ENCODE measurements at regions of chr11 and their contacts with region 1.

Region 1: DNA sequence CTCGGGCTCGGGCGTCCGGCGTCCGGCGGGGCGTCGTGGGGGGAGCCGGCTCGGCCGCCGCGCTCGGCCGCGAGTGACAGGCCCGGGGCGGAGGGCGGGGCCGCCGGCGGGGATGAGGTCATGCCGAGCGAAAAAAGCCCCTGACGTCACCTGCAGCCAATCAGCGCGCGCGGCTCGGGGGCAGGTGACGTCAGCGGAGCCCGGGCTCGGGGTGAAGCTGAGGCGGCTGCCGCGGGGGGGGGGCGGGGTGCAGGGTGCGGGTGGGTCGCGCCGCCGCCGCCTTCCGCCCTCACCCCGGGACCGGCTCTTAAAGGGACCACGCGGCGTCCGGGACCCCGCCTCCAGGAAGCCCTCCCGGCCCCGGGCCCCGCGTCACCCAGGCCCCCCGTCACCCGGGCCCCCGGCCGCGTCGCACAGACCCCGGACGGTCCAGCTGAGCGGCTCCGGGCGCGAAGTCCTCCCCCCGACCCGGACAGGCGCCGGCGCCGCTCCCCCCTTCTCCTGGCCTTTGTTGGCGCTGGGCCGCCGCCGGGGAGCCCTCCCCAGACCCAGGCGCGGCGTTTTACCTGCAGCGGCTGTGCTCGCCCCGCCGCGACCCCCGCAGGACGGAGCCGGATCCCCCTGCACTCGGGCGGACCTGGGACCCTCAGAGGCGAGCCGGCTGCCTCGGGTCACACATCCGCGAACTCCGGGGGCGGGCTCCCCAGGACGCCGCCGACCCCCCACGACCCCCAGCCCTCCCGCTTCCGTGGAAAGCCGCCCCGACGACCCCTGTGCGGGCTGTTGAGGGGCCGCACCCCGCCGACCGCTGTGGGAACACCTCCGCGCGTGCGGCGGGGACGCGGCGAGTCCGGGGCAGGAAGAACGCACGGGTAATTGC is at the start of gene DUSP8:
- DNase-seq: peak; percentile 96
- ATAC-seq: peak; percentile 64
- H3K4me3 Mint-ChIP-seq: peak within 1 kb of the TSS; percentile 51
- H3K27ac Mint-ChIP-seq: no peak within 1 kb of the TSS
- H3K4me1 Mint-ChIP-seq: peaks cover 9% of the 10 kb centered on the region
- H3K27me3 Mint-ChIP-seq: peaks cover 2% of the 10 kb centered on the region
- total RNA-seq, gene DUSP8: 1.3 to 2.8 TPM

Region 2: GRCh38 chr11:747158-748006 is 825.1 kb before region 1 on chr11 and contains the start of gene TALDO1:
- CTCF ChIA-PET with region 1: no interaction called
- POLR2A ChIA-PET with region 1: no interaction called
- intact Hi-C with region 1: loop called in 1 of 2 experiments (anchors 2 kb)
- DNase-seq: peak; percentile 92
- ATAC-seq: peak; percentile 91
- H3K4me3 Mint-ChIP-seq: peak within 1 kb of the TSS; percentile 82
- H3K27ac Mint-ChIP-seq: peak within 1 kb of the TSS; percentile 72
- H3K4me1 Mint-ChIP-seq: peaks cover 20% of the 10 kb centered on the region
- H3K27me3 Mint-ChIP-seq: no peaks in the 10 kb centered on the region
- total RNA-seq, gene TALDO1: 239 to 246 TPM

Region 3: DNA sequence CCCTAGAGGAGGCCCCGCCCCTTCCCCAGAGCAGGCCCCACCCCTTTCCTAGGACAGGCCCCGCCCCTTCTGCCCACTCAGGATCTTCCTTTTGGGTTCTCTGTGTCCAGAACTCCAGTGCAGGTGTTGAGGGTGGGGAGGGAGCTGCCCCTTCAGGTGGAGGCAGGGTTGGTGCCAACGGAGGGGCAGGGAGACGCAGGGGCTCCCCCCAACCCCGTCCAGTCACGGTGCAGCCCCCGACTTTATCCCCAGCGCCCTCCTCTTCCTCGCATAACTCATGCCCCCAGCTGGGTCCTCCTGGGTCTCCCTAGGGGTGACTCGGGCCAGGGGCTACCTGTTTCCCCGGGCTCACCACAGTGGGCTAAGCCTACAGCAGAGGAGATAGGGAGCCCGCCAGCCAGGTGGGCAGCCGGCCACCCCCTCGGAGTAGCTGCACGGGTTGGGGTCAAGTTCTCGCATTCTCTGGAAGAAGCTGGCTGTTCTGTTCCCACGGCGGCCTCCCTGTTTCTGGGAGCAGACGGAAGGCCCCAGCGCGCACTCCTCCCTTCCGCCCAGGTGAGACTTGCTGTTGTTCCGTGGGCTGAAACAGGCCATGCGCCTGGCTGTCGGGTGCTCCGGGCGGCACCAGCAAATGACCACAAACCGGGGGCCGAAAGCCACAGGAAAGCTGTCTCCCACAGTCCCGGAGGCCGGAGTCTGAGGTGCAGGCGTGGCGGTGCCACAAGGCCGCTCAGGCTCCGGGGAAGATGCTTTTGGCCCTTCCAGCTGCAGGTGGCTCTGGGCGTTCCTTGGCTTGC is 458.8 kb before region 1 on chr11:
- CTCF ChIA-PET with region 1: no interaction called
- POLR2A ChIA-PET with region 1: no interaction called
- intact Hi-C with region 1: loop called in 1 of 2 experiments (anchors 1 kb)
- DNase-seq: peak; percentile 32
- ATAC-seq: peak; percentile 37
- H3K4me3 Mint-ChIP-seq: no peak overlapping the region
- H3K27ac Mint-ChIP-seq: no peak overlapping the region
- H3K4me1 Mint-ChIP-seq: no peaks in the 10 kb centered on the region
- H3K27me3 Mint-ChIP-seq: no peaks in the 10 kb centered on the region

Region 4: GRCh38 chr11:1309498-1310317 is 262.7 kb before region 1 on chr11 and contains the start of gene TOLLIP:
- CTCF ChIA-PET with region 1: no interaction called
- POLR2A ChIA-PET with region 1: no interaction called
- intact Hi-C with region 1: loop called in 1 of 2 experiments (anchors 1 kb)
- DNase-seq: peak; percentile 98
- ATAC-seq: peak; percentile 92
- H3K4me3 Mint-ChIP-seq: peak within 1 kb of the TSS; percentile 76
- H3K27ac Mint-ChIP-seq: peak within 1 kb of the TSS; percentile 92
- H3K4me1 Mint-ChIP-seq: peaks cover 40% of the 10 kb centered on the region
- H3K27me3 Mint-ChIP-seq: no peaks in the 10 kb centered on the region
- total RNA-seq, gene TOLLIP: 29.6 to 45.8 TPM

Region 5: GRCh38 chr11:1515082-1516060 is 57.1 kb before region 1 on chr11:
- CTCF ChIA-PET with region 1: interaction called, 6 read pairs
- POLR2A ChIA-PET with region 1: no interaction called
- intact Hi-C with region 1: loop called in 1 of 2 experiments (anchors 1 kb)
- DNase-seq: peak; percentile 88
- ATAC-seq: peak; percentile 86
- H3K4me3 Mint-ChIP-seq: no peak overlapping the region
- H3K27ac Mint-ChIP-seq: no peak overlapping the region
- H3K4me1 Mint-ChIP-seq: peaks cover 44% of the 10 kb centered on the region
- H3K27me3 Mint-ChIP-seq: no peaks in the 10 kb centered on the region

Region 6: GRCh38 chr11:1589996-1590395 is 17.6 kb after region 1 on chr11:
- CTCF ChIA-PET with region 1: interaction called, 31 read pairs
- POLR2A ChIA-PET with region 1: no interaction called
- intact Hi-C with region 1: no loop called
- DNase-seq: no peak
- ATAC-seq: no peak
- H3K4me3 Mint-ChIP-seq: no peak overlapping the region
- H3K27ac Mint-ChIP-seq: no peak overlapping the region
- H3K4me1 Mint-ChIP-seq: peaks cover 6% of the 10 kb centered on the region
- H3K27me3 Mint-ChIP-seq: peaks cover 4% of the 10 kb centered on the region

Region 7: GRCh38 chr11:1652771-1653540 is 80.5 kb after region 1 on chr11:
- CTCF ChIA-PET with region 1: no interaction called
- POLR2A ChIA-PET with region 1: no interaction called
- intact Hi-C with region 1: no loop called
- DNase-seq: peak; percentile 86
- ATAC-seq: peak; percentile 91
- H3K4me3 Mint-ChIP-seq: no peak overlapping the region
- H3K27ac Mint-ChIP-seq: no peak overlapping the region
- H3K4me1 Mint-ChIP-seq: no peaks in the 10 kb centered on the region
- H3K27me3 Mint-ChIP-seq: peaks cover 3% of the 10 kb centered on the region

Region 8: DNA sequence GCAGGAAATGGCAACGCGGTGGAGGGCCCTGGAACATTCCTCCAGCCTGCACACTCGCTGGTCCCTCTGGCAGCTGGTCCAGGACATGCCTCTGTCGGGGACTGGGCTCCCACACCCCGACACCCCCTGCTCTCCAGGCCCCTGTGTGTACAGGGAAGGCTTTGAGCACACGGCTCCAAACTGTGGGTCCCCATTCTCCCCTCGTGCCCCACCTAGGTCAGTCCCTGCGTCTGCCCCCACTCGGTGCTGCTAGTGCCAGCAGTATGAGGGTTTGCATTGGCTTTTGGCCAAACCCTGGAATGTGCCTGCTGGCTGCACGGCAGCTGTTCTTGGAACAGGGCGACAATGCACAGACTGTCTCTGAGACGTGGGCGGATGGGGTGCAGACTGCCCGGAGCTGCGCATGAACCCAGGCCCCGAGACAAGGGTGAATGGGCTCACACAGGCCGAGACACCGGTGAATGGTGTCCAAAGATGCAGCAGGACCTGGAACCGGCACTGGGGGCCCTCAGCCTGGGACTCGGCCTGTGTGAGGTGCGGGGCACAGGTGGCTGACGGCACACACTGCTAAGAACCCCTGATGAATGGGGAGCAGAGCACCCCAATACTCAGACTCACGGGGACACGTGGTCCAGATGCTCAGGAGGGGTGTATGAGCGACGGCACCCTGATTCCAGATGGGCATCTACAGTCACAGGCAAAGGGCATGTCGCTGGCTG is 254.8 kb after region 1 on chr11:
- CTCF ChIA-PET with region 1: no interaction called
- POLR2A ChIA-PET with region 1: no interaction called
- intact Hi-C with region 1: no loop called
- DNase-seq: no peak
- ATAC-seq: no peak
- H3K4me3 Mint-ChIP-seq: no peak overlapping the region
- H3K27ac Mint-ChIP-seq: no peak overlapping the region
- H3K4me1 Mint-ChIP-seq: no peaks in the 10 kb centered on the region
- H3K27me3 Mint-ChIP-seq: no peaks in the 10 kb centered on the region

Region 9: DNA sequence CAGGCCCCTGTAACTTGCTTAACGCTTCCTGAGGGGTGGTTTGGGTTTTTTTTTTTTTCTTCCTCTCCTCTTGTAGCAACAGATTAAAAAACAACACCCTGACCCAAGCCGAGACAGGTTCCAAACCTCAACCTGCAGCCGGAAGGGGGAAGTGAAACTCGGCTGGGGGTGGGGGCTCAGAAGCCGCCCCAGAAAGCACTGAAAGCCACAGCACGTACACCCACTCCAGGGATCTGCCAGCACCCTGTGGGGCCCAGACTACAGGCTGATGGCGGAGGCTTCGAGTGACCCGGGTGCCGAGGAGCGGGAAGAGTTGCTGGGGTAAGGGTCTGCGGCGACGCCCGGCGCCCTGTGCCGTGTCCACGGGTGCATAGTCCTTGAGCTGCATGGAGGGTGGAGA is 280.4 kb after region 1 on chr11 and contains the start of gene LSP1:
- CTCF ChIA-PET with region 1: interaction called, 4 read pairs
- POLR2A ChIA-PET with region 1: no interaction called
- intact Hi-C with region 1: loop called in 1 of 2 experiments (anchors 5 kb)
- DNase-seq: peak; percentile 93
- ATAC-seq: peak; percentile 60
- H3K4me3 Mint-ChIP-seq: peak within 1 kb of the TSS; percentile 97
- H3K27ac Mint-ChIP-seq: peak within 1 kb of the TSS; percentile 98
- H3K4me1 Mint-ChIP-seq: peaks cover 66% of the 10 kb centered on the region
- H3K27me3 Mint-ChIP-seq: no peaks in the 10 kb centered on the region
- total RNA-seq, gene LSP1: 193 to 227 TPM

Measured in activated CD4-positive, alpha-beta T cell treated with anti-CD3 and anti-CD28 coated beads for 36 hours (primary cell).